ENCODE measurements at regions of chr1 and their contacts with region 1.

Region 1: DNA sequence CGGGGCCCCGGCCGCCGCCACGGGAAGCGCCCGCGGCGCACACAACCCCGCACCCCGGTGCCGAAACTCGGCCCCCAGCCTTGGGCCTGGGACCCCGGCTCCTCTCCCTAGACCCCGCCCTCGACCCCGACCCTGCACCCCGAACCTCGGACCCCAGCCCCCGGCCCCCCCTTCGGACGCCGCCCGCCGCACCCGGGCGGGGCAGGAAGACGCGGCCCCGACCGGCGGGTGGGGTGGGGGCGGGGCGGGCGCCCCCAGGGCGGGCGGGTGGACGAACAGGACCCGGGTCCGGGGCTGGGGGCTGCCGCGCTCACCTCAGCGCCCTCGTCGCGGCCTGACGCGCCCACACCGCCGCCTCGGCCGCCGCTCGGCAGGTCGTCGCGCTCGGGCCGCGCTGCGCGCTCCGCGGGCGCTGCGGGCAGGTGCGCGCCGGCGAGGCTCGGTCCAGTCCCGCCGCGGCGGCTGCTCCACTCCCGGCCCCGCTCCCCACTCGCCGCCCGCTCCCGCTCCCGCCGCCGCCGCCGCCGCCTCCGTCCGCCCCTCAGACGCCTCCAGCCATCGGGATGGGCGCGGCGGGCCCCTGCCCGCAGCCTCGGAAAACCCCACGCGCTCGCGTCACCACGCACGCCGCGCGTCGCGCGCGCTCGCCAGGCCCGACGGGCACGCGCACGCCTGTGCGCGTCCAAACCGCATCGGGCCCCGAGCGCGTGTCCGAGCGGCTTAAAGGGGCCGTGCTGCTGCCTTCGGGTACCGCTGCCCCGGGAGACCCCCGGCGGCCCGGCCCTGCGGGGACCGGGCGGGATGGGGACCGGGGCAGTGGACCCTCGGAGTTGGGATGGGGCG is at the start of gene GNB1:
- DNase-seq: peak; percentile 91
- ATAC-seq: peak; percentile 47
- H3K4me3 Mint-ChIP-seq: peak within 1 kb of the TSS; percentile 88
- H3K27ac Mint-ChIP-seq: peak within 1 kb of the TSS; percentile 84
- H3K4me1 Mint-ChIP-seq: peaks cover 54% of the 10 kb centered on the region
- H3K27me3 Mint-ChIP-seq: no peaks in the 10 kb centered on the region
- total RNA-seq, gene GNB1: 347 to 669 TPM

Region 2: GRCh38 chr1:1040004-1040991 is 850.4 kb before region 1 on chr1:
- CTCF ChIA-PET with region 1: no interaction called
- POLR2A ChIA-PET with region 1: no interaction called
- intact Hi-C with region 1: loop called in 1 of 2 experiments (anchors 5 kb)
- DNase-seq: peak; percentile 93
- ATAC-seq: peak; percentile 87
- H3K4me3 Mint-ChIP-seq: peak overlapping the region; percentile 35
- H3K27ac Mint-ChIP-seq: no peak overlapping the region
- H3K4me1 Mint-ChIP-seq: peaks cover 15% of the 10 kb centered on the region
- H3K27me3 Mint-ChIP-seq: peaks cover 22% of the 10 kb centered on the region

Region 3: DNA sequence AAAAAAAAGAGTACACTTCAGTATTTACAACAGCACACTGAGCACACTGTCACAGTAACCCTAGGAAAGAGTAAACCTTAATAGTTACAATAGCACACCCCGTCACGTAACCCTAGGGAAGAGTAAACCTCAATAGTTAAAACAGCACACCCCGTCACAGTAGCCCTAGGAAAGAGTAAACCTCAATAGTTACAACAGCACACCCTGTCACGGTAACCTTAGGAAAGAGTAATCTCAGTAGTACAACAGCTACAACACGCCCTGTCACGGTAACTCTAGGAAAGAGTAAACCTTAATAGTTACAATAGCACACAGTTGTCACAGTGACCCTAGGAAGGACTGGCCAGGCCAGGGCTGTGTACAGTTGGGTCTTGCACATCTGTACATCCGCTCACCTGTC is 169.5 kb before region 1 on chr1:
- CTCF ChIA-PET with region 1: no interaction called
- POLR2A ChIA-PET with region 1: no interaction called
- intact Hi-C with region 1: loop called in 1 of 2 experiments (anchors 2 kb)
- DNase-seq: no peak
- ATAC-seq: no peak
- H3K4me3 Mint-ChIP-seq: no peak overlapping the region
- H3K27ac Mint-ChIP-seq: peak overlapping the region; percentile 60
- H3K4me1 Mint-ChIP-seq: peaks cover 5% of the 10 kb centered on the region
- H3K27me3 Mint-ChIP-seq: no peaks in the 10 kb centered on the region

Region 4: GRCh38 chr1:1777950-1778662 is 112.6 kb before region 1 on chr1 and contains the start of gene NADK:
- CTCF ChIA-PET with region 1: interaction called, 3 read pairs
- POLR2A ChIA-PET with region 1: interaction called, 3 read pairs
- intact Hi-C with region 1: loop called (anchors 1 to 2 kb)
- DNase-seq: peak; percentile 77
- ATAC-seq: peak; percentile 42
- H3K4me3 Mint-ChIP-seq: peak within 1 kb of the TSS; percentile 78
- H3K27ac Mint-ChIP-seq: peak within 1 kb of the TSS; percentile 83
- H3K4me1 Mint-ChIP-seq: peaks cover 62% of the 10 kb centered on the region
- H3K27me3 Mint-ChIP-seq: no peaks in the 10 kb centered on the region
- total RNA-seq, gene NADK: 53.1 to 56.2 TPM

Region 5: DNA sequence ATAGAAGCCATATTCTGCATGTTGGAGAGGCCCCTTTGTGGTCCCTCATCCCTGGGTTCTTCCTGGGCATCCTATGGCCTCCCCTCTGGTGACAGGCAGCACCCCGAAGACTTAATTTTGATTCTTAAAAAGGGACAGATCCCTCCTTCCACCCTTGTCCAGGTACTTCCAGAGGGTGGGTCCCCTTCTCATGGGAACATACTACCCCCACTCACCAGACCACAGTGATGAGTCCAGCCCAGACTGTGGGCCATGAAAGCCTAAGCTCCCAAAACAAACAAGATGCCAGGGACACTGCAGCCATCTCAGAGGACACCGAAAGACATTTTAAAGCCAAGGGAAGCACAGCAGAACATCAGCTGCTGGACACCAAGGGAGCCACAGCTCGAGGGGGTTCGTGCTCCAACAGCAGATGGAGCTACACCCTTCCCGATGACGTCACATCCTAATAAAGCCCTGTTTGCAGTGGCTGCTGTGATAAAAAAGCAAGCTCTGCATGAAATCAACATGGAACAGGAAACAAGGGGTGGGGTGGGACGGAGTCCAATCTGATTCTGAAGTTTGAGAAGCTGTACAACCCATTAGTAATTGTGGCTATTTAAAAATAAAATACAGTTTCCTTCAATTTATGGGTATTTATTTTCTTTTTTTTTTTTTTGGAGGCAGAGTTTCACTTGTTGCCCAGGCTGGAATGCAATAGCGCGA is 32.2 kb before region 1 on chr1:
- CTCF ChIA-PET with region 1: no interaction called
- POLR2A ChIA-PET with region 1: interaction called, 11 read pairs
- intact Hi-C with region 1: no loop called
- DNase-seq: peak; percentile 24
- ATAC-seq: no peak
- H3K4me3 Mint-ChIP-seq: no peak overlapping the region
- H3K27ac Mint-ChIP-seq: peak overlapping the region; percentile 23
- H3K4me1 Mint-ChIP-seq: peaks cover 71% of the 10 kb centered on the region
- H3K27me3 Mint-ChIP-seq: no peaks in the 10 kb centered on the region

Region 6: DNA sequence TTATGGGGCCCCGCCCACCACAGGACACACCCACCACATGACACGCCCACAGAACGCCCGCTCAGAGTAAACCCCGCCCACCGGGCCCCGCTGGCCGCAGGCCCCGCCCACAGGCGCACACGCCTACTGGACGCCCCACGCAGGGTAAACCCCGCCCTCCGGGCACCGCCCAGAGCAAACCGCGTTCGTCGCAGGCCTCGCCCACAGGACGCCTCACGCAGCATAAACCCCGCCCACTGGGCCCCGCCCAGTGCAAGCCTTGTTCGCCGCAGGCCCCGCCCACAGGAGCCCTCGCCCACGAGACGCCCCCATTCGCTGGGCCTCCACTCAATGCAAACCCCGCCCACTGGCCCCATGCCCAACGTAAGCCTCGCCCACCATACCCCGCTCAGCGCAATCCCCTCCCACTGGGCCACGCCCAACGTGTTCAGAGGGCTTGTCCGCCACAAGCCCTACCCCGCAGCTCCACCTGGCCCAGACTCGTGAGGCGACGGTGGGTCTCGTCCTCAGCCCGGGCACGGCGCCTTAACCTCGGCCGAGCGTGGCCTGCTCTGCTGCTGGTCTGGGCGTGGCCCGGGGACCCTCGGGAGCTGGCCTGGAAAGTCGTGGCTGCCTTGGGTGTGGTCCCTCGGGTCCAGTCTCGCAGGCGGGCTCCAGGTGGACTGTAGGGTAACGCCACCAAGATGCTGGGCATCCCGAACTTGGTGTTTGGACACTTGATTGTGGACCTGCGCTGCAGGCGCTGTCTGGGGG is 28.8 kb after region 1 on chr1:
- CTCF ChIA-PET with region 1: no interaction called
- POLR2A ChIA-PET with region 1: no interaction called
- intact Hi-C with region 1: loop called in 1 of 2 experiments (anchors 1 kb)
- DNase-seq: peak; percentile 100
- ATAC-seq: peak; percentile 92
- H3K4me3 Mint-ChIP-seq: peak overlapping the region; percentile 62
- H3K27ac Mint-ChIP-seq: no peak overlapping the region
- H3K4me1 Mint-ChIP-seq: peaks cover 4% of the 10 kb centered on the region
- H3K27me3 Mint-ChIP-seq: no peaks in the 10 kb centered on the region

Region 7: DNA sequence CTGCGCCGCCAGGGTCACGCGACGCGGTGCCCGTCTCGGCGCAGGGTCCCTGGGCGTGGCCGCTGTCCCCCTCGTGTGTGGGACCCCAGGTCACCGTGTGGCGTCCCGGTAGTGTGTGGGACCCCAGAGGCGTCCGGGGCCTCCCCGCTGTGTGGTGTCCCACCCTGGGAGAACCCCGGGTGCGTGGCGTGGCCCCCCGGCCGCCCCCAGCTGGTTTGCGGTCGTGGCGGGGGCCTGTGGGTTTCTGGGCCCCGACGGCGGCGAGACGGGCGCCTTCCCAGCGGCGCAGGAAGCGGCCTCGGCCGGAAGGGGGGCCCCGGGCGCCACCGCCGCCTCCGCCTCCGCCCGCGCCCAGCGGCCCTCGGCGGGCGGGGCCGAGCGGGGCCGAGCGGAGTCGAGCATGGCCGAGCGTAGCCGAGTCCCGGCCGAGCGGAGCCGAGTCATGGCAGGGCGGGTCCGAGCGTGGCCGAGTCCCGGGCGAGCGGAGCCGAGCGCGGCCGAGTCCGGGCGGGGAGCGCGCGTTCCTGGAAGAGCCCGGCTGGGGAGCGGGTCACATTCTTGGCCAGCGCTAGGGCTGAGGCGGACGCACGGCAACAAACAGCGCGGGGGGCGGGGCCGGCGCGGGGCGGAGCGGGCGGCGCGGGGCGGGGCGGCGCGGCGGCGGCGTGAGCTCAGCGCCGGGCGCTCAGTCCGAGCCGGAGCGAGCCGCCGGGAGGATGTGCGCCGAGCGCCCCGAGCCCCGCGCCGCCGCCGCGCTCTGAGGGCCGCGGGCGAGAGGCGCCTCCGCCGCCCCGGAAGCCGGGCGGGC is 336.8 kb after region 1 on chr1:
- CTCF ChIA-PET with region 1: no interaction called
- POLR2A ChIA-PET with region 1: no interaction called
- intact Hi-C with region 1: loop called in 1 of 2 experiments (anchors 1 kb)
- DNase-seq: peak; percentile 98
- ATAC-seq: peak; percentile 94
- H3K4me3 Mint-ChIP-seq: peak overlapping the region; percentile 32
- H3K27ac Mint-ChIP-seq: no peak overlapping the region
- H3K4me1 Mint-ChIP-seq: peaks cover 6% of the 10 kb centered on the region
- H3K27me3 Mint-ChIP-seq: no peaks in the 10 kb centered on the region

Measured in activated CD4-positive, alpha-beta T cell treated with anti-CD3 and anti-CD28 coated beads for 36 hours (primary cell).